Posterior vena cava (tissue), 2 donors: ENCODE measurements at regions of chr10 and their contacts with region 1.

Region 1: GRCh38 chr10:133289761-133290160 is 13.1 kb upstream of the ADAM8 start:
- DNase-seq: no peak

Region 2: DNA sequence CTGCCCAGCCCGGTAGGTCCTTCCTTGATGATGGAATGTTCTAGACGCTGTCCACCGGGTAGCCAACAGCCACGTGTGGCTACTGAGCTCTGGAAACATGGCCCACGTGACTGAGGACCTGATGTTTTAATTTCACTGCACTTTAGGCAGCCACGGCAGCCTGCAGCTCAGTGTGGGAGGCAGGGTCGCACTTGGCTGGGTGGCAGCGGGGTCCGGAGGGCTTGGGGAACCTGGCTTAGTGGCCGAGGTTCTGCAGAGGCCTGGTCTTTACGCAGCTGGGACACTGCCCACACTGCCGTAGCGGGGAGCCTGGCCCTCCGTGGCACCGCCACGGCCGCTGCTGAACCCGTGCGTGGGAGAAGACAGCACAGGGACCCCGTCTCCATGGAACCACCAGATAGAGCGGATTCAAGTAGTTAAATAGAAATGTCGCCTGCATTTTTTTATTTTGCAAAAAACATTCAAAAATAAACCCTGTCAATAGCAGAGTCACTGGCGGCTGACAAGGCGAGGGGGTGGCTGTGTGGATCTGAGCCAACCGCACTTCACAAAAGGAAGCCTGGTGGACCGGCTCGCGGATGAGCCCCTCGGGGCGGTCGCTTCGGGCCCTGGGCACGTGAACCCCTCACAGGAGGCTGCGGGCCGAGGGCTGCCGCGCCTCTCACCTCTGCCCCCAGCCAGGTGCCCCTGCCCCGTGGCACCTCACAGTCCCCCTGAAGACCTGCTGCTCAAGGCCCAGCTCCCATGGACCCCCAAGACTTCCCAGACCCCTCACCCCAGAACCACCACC is 85.3 kb before region 1 on chr10:
- intact Hi-C with region 1: no loop called
- DNase-seq: no peak

Region 3: DNA sequence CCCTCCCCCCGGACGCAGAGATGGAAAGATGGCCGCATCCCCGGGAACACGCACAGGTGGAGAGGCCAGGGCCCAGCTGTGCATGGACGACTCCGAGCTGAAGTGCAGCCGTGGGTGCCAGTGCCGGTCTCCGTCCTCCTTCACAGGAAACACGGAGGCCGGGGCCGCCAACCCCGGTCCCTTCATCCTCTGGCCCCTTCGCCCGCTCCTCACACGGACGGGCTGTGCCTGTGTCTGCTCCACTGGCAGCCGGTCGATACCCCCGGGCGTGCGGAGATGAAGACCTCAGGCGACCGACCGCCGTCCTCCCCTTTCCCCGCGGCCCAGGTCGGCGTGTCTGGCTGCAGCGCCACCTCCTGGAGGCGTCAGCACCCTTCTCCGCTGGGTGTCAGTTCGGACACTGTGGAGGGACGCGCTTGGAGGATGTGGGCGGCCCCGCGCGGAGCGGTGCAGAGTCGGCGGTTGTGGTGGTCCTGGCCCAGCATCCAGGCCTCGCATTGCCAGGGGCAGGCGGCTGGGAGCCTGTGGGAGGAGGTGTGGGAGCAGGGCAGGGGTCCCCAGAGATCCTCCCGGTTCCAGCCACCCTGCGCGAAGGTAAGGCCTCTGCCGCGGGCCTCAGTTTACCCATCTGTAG is 28.9 kb after region 1 on chr10:
- intact Hi-C with region 1: loop called in 1 of 2 experiments (anchors 1 kb)
- DNase-seq: peak; percentile 89